Mammary epithelial cell (primary cell): ENCODE measurements at regions of chr17 and their contacts with region 1.

Region 1: DNA sequence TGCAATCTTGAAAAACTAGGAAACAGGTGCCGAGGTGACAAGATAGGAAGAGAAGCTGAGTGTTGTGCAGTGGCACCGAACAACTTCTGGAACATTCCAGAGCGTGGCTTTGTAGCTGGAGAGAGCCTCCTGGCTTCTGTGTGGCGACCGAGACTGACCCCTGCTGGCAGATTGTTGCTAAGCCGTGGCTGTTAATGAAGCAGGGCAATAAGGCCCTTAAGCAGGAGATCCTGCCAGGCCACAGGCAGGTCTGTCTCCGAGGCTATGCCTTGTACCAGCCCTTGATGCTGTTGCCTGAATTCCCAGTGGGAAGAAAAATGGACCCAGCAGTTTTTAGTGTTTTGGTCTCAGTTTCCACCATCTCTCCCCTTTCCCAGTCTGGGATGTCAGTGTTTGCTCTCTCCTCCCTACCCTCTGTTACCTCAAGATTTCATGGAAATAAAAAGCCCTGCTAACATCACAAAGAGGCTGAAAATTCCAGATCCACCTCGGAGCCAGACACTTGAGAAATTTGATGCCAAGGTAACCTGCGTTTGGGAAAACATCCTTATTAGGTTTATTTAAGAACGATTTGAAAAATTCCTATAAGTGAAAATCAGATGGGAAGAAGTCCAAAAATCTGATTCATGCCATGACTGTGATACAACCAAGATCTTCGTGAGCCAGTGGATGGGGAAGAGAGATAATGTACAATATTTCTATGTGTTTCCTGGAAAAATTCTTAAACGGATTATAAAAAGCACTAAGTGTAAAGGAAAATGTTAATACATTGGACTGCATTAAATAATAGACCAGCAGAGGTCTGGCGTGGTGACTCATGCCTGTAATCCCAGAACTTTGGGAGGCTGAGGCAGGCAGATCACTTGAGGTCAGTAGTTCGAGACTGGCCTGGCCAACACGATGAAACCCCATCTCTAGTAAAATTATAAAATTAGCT is 265.1 kb downstream of the PRKCA start:
- DNase-seq: peak; percentile 68
- H3K4me3 ChIP-seq: no peak overlapping the region
- H3K27ac ChIP-seq: peak overlapping the region; percentile 5
- H3K4me1 ChIP-seq: peaks cover 13% of the 10 kb centered on the region
- H3K27me3 ChIP-seq: no peaks in the 10 kb centered on the region
- CTCF ChIP-seq: peak; percentile 92 to 97

Region 2: GRCh38 chr17:65966072-65966695 is 601.3 kb before region 1 on chr17:
- CTCF ChIA-PET with region 1: no interaction called
- dilution Hi-C with region 1: no loop called
- in situ Hi-C with region 1: no loop called
- intact Hi-C with region 1: no loop called
- DNase-seq: no peak
- H3K4me3 ChIP-seq: no peak overlapping the region
- H3K27ac ChIP-seq: no peak overlapping the region
- H3K4me1 ChIP-seq: no peaks in the 10 kb centered on the region
- H3K27me3 ChIP-seq: no peaks in the 10 kb centered on the region
- CTCF ChIP-seq: no peak

Region 3: DNA sequence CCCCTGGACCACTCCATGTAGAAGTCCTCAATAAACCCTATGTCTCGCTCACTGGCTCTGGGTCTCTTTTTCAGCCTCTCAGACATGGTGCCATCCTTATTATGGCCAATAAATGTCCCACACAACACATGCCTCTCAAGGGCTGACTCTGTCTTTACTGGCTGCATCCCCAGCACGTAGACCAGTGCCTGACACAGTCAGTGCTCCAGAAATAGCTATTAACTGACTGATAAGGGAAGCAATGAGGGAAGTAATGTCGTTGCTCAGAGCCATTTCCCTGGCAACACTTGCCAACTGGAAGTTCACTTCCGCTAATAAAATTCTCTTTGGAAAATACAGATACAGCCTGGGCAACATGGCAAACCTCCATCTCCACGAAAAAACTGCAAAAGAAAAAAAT is 319.2 kb before region 1 on chr17:
- CTCF ChIA-PET with region 1: no interaction called
- dilution Hi-C with region 1: no loop called
- in situ Hi-C with region 1: loop called (anchors 5 kb)
- intact Hi-C with region 1: no loop called
- DNase-seq: no peak
- H3K4me3 ChIP-seq: no peak overlapping the region
- H3K27ac ChIP-seq: no peak overlapping the region
- H3K4me1 ChIP-seq: peaks cover 9% of the 10 kb centered on the region
- H3K27me3 ChIP-seq: no peaks in the 10 kb centered on the region
- CTCF ChIP-seq: no peak

Region 4: GRCh38 chr17:66255112-66255511 is 312.4 kb before region 1 on chr17:
- CTCF ChIA-PET with region 1: no interaction called
- dilution Hi-C with region 1: no loop called
- in situ Hi-C with region 1: loop called (anchors 5 kb)
- intact Hi-C with region 1: loop called (anchors 1 kb)
- DNase-seq: peak; percentile 69
- H3K4me3 ChIP-seq: no peak overlapping the region
- H3K27ac ChIP-seq: no peak overlapping the region
- H3K4me1 ChIP-seq: no peaks in the 10 kb centered on the region
- H3K27me3 ChIP-seq: no peaks in the 10 kb centered on the region
- CTCF ChIP-seq: peak; percentile 68 to 75

Region 5: GRCh38 chr17:66301797-66302741 is 265.4 kb before region 1 on chr17 and contains the start of gene PRKCA:
- CTCF ChIA-PET with region 1: no interaction called
- dilution Hi-C with region 1: no loop called
- in situ Hi-C with region 1: no loop called
- intact Hi-C with region 1: loop called (anchors 1 kb)
- DNase-seq: peak; percentile 73
- H3K4me3 ChIP-seq: peak within 1 kb of the TSS; percentile 80 to 97 (median 84)
- H3K27ac ChIP-seq: peak within 1 kb of the TSS; percentile 14
- H3K4me1 ChIP-seq: peaks cover 15% of the 10 kb centered on the region
- H3K27me3 ChIP-seq: no peaks in the 10 kb centered on the region
- CTCF ChIP-seq: no peak
- total RNA-seq, gene PRKCA: 6.0 to 15.5 TPM

Region 6: GRCh38 chr17:66431910-66432683 is 135.4 kb before region 1 on chr17:
- CTCF ChIA-PET with region 1: no interaction called
- dilution Hi-C with region 1: no loop called
- in situ Hi-C with region 1: no loop called
- intact Hi-C with region 1: loop called (anchors 2 kb)
- DNase-seq: peak; percentile 75
- H3K4me3 ChIP-seq: peak overlapping the region in 1 of 3 experiments; percentile 10
- H3K27ac ChIP-seq: peak overlapping the region; percentile 70
- H3K4me1 ChIP-seq: peaks cover 23% of the 10 kb centered on the region
- H3K27me3 ChIP-seq: no peaks in the 10 kb centered on the region
- CTCF ChIP-seq: no peak

Region 7: GRCh38 chr17:66466840-66467367 is 100.6 kb before region 1 on chr17:
- CTCF ChIA-PET with region 1: no interaction called
- dilution Hi-C with region 1: no loop called
- in situ Hi-C with region 1: no loop called
- intact Hi-C with region 1: loop called (anchors 1 kb)
- DNase-seq: peak; percentile 98
- H3K4me3 ChIP-seq: peak overlapping the region in 1 of 3 experiments; percentile 21
- H3K27ac ChIP-seq: peak overlapping the region; percentile 83
- H3K4me1 ChIP-seq: peaks cover 43% of the 10 kb centered on the region
- H3K27me3 ChIP-seq: no peaks in the 10 kb centered on the region
- CTCF ChIP-seq: no peak

Region 8: GRCh38 chr17:66625311-66625775 is 57.8 kb after region 1 on chr17:
- CTCF ChIA-PET with region 1: no interaction called
- dilution Hi-C with region 1: no loop called
- in situ Hi-C with region 1: no loop called
- intact Hi-C with region 1: loop called (anchors 5 kb)
- DNase-seq: peak; percentile 19
- H3K4me3 ChIP-seq: no peak overlapping the region
- H3K27ac ChIP-seq: no peak overlapping the region
- H3K4me1 ChIP-seq: no peaks in the 10 kb centered on the region
- H3K27me3 ChIP-seq: no peaks in the 10 kb centered on the region
- CTCF ChIP-seq: peak; percentile 32 to 50